Aorta (tissue), 5 donors: ENCODE measurements at regions of chr2 and their contacts with region 1.

Region 1: DNA sequence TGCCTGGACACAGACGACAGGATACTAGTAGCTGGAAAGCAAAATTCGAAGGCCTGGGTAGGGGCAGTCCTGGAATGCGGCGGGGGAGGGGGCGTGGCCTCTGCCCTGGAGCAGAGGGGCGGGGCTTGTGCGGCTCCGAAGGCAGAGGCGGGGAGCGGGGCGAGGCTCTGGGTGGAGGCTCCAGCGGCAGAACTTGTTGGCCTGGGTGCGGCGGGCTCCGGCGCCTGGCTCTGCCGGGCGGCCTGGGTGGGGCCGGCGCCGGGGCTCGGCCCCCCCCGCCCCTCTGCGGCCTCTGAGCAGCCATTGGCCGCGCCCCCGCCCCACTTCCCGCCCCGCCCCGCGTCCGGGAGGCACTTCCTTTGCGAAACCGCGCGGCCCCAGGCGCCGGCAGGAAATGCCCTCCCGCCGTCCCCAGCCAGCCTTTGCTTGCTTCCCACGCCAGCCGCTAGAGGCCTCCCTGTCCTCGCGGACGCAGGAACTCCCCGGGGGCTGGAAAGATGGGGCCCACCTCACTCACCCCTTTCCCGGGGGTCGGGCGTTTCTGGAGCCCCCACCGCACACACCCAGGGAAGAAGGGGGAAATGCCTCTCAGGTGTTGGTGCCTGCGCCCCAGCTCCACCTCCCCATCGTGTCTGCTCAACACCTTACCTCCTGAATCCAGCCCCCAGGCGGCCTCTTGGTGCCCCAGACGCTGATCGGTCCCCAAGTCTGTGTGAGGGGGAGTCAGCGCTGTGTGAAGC is 6.7 kb downstream of the CTDSP1 start:
- DNase-seq: peak; percentile 98 to 99
- ATAC-seq: peak; percentile 94
- H3K4me3 ChIP-seq: peak overlapping the region in 1 of 2 donors; percentile 16
- H3K27ac ChIP-seq: peak overlapping the region in 1 of 2 donors; percentile 78
- H3K4me1 ChIP-seq: no peaks in the 10 kb centered on the region
- H3K27me3 ChIP-seq: no peaks in the 10 kb centered on the region

Region 2: GRCh38 chr2:218216674-218217359 is 189.6 kb before region 1 on chr2 and contains the start of gene ARPC2:
- intact Hi-C with region 1: loop called in 1 of 2 experiments (anchors 5 kb)
- DNase-seq: peak; percentile 97 to 99
- ATAC-seq: peak; percentile 98
- H3K4me3 ChIP-seq: peak within 1 kb of the TSS; percentile 94 to 97
- H3K27ac ChIP-seq: peak within 1 kb of the TSS; percentile 64 to 92
- H3K4me1 ChIP-seq: peaks cover 3 to 10% of the 10 kb centered on the region in 2 donors
- H3K27me3 ChIP-seq: no peaks in the 10 kb centered on the region
- total RNA-seq, gene ARPC2: 351 to 367 TPM

Region 3: DNA sequence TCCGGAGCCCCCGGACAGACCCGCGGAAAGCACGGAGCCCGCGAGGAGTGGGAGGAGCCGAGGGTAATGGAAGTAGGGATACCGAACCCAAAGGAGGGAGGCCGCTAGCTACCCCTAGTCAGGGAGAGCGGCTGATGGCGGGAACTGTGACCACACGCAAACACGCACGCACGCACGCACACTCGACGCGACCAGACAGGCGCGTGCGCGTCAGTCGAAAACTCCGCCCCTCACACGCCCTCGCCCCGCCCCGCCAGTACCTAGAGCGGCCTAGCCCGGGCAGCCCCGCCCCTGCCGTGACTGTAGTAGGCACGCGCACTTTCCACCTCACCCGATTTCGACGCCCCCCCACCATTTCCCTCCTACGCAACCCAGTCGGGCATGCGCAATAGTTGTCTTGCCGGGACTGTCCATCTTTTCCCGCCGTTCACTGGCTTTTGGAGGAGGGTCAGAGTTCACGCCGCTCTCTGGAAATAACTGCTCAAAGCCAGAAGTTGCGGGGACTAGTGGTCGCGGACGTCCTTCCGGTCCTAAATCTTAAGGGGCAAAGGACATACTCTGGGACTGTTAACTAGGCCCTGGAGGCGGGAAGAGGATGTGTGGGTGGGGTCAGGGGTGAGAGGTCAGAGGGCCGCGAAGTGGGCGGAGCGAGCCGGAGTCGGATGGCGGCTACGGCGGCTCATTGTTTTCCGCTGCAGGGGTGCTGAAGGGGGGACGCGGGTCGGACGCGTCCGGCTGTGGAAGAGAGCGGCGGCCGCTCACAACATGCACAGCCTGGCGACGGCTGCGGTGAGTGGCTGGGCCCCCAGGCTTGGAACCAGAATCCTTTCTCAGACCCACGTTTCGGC is 162.0 kb after region 1 on chr2 and contains the starts of genes CNOT9 and USP37:
- intact Hi-C with region 1: loop called in 1 of 2 experiments (anchors 2 kb)
- DNase-seq: peak; percentile 100
- ATAC-seq: peak; percentile 100
- H3K4me3 ChIP-seq: peak within 1 kb of the TSS; percentile 63 to 80
- H3K27ac ChIP-seq: peak within 1 kb of the TSS; percentile 2 to 82
- H3K4me1 ChIP-seq: no peaks in the 10 kb centered on the region
- H3K27me3 ChIP-seq: no peaks in the 10 kb centered on the region
- total RNA-seq, gene CNOT9: 35.6 TPM
- total RNA-seq, gene USP37: 13.6 to 22.2 TPM

Region 4: DNA sequence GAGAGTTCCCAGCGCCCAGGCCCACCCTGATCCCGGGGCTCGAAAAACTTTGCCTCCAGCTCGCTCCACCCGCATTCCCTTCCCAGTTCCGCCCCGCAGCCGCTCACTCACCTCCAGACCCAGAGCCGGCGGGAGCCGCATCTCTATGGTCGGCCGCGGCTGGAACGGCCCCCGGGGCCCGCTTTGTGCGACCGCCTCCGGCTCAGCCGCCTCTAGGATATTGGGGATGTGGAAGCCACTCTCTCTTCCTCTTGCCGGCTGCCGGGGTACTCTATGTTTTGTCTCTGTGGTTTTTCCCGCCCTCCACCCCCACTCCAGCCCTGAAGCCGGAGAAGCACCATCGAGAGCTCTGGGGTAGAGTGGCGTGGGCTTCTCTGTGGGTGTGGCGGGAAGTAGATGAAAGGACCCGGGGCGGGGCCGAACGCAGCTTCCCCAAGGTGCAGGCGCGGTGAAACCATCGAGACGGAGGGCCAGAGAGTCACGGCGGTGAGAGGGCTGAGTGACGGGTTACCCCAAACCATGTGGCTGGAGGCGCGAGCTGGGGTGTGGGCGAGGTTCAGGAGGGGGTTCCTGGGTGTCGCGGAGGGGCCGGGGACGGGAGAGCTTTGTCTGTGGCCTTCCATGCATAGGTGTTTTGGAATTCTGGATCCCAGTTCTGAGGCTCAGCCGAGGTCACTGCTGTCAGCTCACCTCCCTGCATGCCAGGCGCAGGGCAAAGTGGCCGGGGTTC is 253.0 kb after region 1 on chr2 and contains the starts of genes BCS1L and ZNF142:
- intact Hi-C with region 1: loop called in 1 of 2 experiments (anchors 1 kb)
- DNase-seq: peak; percentile 93 to 97
- ATAC-seq: peak; percentile 95
- H3K4me3 ChIP-seq: peak within 1 kb of the TSS; percentile 46 to 72
- H3K27ac ChIP-seq: no peak within 1 kb of the TSS
- H3K4me1 ChIP-seq: no peaks in the 10 kb centered on the region
- H3K27me3 ChIP-seq: no peaks in the 10 kb centered on the region
- total RNA-seq, gene BCS1L: 21.1 to 32.7 TPM
- total RNA-seq, gene ZNF142: 27.7 to 32.9 TPM

Region 5: GRCh38 chr2:218908721-218909619 is 502.6 kb after region 1 on chr2:
- intact Hi-C with region 1: no loop called
- DNase-seq: peak; percentile 95 to 98
- ATAC-seq: peak; percentile 96
- H3K4me3 ChIP-seq: peak overlapping the region; percentile 15 to 63
- H3K27ac ChIP-seq: no peak overlapping the region
- H3K4me1 ChIP-seq: no peaks in the 10 kb centered on the region
- H3K27me3 ChIP-seq: no peaks in the 10 kb centered on the region